Naive thymus-derived CD8-positive, alpha-beta T cell (primary cell): ENCODE measurements at regions of chr17 and their contacts with region 1.

Region 1: GRCh38 chr17:35214631-35215273 is 20.6 kb upstream of the SLC35G3 start:
- DNase-seq: peak in 8 of 10 donors; percentile 9 to 66 (median 26)
- ATAC-seq: peak; percentile 44 to 50
- H3K4me3 Mint-ChIP-seq: peak overlapping the region; percentile 64 to 91 (median 84)
- H3K27ac Mint-ChIP-seq: peak overlapping the region; percentile 94 to 98 (median 97)
- H3K4me1 Mint-ChIP-seq: peaks cover 47 to 89% (median 88%) of the 10 kb centered on the region in 4 donors
- H3K27me3 Mint-ChIP-seq: no peaks in the 10 kb centered on the region

Region 2: DNA sequence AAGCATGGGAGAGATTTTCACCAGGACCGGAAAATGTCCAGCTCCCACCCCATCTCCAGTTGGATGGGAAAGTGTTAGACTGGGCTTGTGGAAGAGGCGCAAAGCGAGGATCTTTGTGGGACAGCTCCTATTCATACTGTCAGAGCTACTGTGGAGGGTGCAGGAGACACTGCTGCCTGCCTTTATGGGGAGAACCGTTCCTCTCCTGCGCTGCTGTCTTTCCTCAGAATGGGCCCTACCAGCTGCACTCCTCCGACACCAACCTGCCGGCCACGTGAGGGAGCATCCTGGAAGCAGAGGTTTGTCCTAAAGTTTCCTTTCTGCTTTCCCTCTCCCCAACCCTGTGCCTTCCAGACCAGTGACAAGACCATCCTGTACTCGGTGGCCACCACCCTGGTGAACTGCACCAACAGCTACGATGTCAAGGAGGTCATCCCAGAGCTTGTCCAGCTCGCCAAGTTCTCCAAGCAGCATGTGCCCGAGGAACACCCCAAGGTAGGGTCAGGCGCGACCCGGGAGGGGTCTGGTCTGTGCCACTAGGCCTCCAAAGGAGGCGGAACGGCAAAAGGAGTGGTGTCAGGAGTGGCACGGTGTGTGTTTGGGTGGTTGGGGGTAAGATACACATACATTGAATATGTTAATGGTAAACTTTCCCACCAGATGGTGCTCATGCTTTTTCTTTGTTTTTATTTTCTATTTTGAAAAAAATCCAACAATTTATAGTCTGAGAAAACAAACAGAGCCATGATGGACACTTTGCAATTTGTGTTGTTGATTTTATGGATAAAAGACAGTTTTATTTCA is 43.6 kb before region 1 on chr17:
- POLR2A ChIA-PET with region 1: interaction called, 29 read pairs
- DNase-seq: peak in 8 of 10 donors; percentile 13 to 79 (median 49)
- ATAC-seq: peak; percentile 79 to 87
- H3K4me3 Mint-ChIP-seq: peak overlapping the region; percentile 48 to 84 (median 60)
- H3K27ac Mint-ChIP-seq: peak overlapping the region; percentile 55 to 96 (median 91)
- H3K4me1 Mint-ChIP-seq: peaks cover 23 to 51% (median 48%) of the 10 kb centered on the region in 4 donors
- H3K27me3 Mint-ChIP-seq: no peaks in the 10 kb centered on the region

Region 3: DNA sequence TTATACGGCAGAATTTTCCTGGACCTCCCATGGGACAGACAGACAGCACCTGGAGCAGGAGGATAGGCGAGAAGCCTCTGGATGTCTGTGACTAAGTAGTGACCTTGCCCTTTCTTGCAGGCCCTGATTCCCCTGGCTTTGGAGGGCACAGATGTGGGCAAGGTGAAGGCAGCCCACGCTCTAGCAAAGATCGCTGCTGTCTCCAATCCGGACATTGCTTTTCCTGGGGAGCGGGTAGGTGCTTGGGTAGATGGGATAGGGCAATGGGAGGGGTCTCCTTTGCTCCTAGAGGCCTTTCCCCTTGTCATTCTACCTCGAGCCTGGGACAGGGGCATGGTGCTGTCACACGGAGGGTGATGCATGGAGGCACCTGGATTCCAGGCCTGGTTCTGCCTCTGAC is 37.9 kb before region 1 on chr17:
- POLR2A ChIA-PET with region 1: interaction called, 21 read pairs
- DNase-seq: no peak
- ATAC-seq: no peak
- H3K4me3 Mint-ChIP-seq: peak overlapping the region in 8 of 10 donors; percentile 27 to 90 (median 75)
- H3K27ac Mint-ChIP-seq: peak overlapping the region; percentile 88 to 99 (median 93)
- H3K4me1 Mint-ChIP-seq: peaks cover 35 to 90% (median 71%) of the 10 kb centered on the region in 4 donors
- H3K27me3 Mint-ChIP-seq: peaks cover 0 to 2% (median 0%) of the 10 kb centered on the region in 5 donors

Region 4: DNA sequence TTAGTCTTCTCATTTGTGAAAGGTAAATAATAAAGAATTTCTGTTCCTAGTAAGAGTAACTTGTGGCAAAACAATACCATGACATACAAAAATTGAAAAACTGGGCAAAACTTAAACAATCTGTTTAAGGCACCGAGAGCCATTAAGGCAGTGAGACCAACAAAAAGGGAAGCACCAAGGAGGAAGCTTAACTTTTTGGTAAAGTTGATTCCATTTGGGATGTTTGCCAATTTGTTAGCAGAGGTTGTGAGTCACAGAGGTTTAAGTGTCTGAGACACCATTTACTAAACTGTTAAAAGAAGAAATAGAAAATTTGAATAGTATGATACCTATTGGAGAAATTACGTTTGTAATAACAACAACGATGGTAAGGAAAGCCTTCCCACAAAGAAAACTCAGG is 25.5 kb before region 1 on chr17:
- POLR2A ChIA-PET with region 1: interaction called, 91 read pairs
- DNase-seq: no peak
- ATAC-seq: no peak
- H3K4me3 Mint-ChIP-seq: peak overlapping the region; percentile 75 to 92 (median 84)
- H3K27ac Mint-ChIP-seq: peak overlapping the region; percentile 67 to 97 (median 94)
- H3K4me1 Mint-ChIP-seq: peaks cover 50 to 97% (median 78%) of the 10 kb centered on the region in 4 donors
- H3K27me3 Mint-ChIP-seq: no peaks in the 10 kb centered on the region

Region 5: DNA sequence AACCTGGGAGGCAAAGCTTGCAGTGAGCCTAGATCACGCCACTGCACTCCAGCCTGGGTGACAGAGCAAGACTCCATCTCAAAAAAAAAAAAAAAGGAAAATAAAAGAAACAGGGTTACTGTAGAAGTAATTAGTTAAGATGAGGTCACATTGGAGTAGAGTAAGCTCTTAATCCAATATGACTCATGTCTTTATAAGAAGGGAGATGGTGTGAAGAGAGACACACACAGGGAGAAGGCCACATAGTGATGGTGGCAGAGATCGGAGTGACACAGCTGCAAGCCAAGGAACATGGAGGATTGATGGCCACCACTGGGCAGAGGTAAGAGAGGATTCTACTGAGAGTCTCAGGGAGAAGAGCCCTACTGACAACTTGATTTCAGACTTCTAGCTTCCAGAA is 12.8 kb after region 1 on chr17:
- POLR2A ChIA-PET with region 1: interaction called, 255 read pairs
- DNase-seq: no peak
- ATAC-seq: no peak
- H3K4me3 Mint-ChIP-seq: peak overlapping the region in 1 of 10 donors; percentile 36
- H3K27ac Mint-ChIP-seq: peak overlapping the region in 5 of 10 donors; percentile 19 to 63 (median 60)
- H3K4me1 Mint-ChIP-seq: peaks cover 28 to 55% (median 48%) of the 10 kb centered on the region in 4 donors
- H3K27me3 Mint-ChIP-seq: no peaks in the 10 kb centered on the region

Region 6: DNA sequence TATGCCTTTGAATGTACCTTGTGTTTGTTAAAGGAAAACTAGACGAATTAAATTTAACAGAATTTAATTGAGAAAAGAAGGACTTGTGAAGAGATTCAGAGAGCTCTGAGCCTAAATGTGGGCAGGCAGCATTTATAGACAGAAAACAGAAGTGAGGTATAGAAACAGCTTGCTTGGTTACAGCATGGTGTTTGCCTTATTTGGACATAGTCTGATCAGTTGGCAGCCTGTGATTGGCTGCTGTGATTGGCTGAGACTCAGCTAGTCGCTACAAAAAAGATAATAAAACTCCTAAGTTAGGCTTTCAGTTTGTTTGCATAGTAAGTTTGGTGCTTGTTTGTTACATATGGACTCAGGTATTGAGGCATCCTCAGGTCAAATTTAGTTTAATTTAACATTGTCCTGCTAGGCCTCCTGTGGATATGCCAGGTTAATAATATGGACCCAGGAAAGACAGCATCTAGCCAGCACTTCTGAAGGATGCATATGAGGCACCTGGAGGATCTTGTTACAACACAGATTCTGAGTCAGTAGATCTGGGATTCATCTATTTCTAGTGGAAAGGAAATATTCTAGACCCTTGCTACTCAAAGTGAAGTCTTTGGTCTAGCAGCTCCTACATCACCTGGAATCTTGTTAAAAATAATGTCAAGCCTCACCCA is 71.5 kb after region 1 on chr17:
- POLR2A ChIA-PET with region 1: no interaction called
- DNase-seq: peak in 7 of 10 donors; percentile 15 to 62 (median 40)
- ATAC-seq: peak; percentile 99
- H3K4me3 Mint-ChIP-seq: peak overlapping the region; percentile 14 to 64 (median 44)
- H3K27ac Mint-ChIP-seq: peak overlapping the region; percentile 77 to 94 (median 87)
- H3K4me1 Mint-ChIP-seq: peaks cover 26 to 58% (median 50%) of the 10 kb centered on the region in 4 donors
- H3K27me3 Mint-ChIP-seq: no peaks in the 10 kb centered on the region

Region 7: GRCh38 chr17:35540589-35541404 is 326.0 kb after region 1 on chr17:
- POLR2A ChIA-PET with region 1: interaction called, 82 read pairs
- DNase-seq: peak in 3 of 10 donors; percentile 13 to 38 (median 33)
- ATAC-seq: peak; percentile 37
- H3K4me3 Mint-ChIP-seq: peak overlapping the region; percentile 70 to 98 (median 89)
- H3K27ac Mint-ChIP-seq: peak overlapping the region; percentile 80 to 100 (median 95)
- H3K4me1 Mint-ChIP-seq: peaks cover 18 to 62% (median 51%) of the 10 kb centered on the region in 4 donors
- H3K27me3 Mint-ChIP-seq: no peaks in the 10 kb centered on the region